ENCODE measurements at regions of chr1 and their contacts with region 1.

Region 1: GRCh38 chr1:158203693-158204457 is 23.2 kb downstream of the CD1D start:
- DNase-seq: no peak
- H3K4me3 Mint-ChIP-seq: no peak overlapping the region
- H3K27ac Mint-ChIP-seq: no peak overlapping the region
- H3K4me1 Mint-ChIP-seq: peaks cover 16% of the 10 kb centered on the region
- H3K27me3 Mint-ChIP-seq: peaks cover 26% of the 10 kb centered on the region

Region 2: GRCh38 chr1:157390651-157391050 is 813.2 kb before region 1 on chr1:
- intact Hi-C with region 1: no loop called
- DNase-seq: no peak
- H3K4me3 Mint-ChIP-seq: no peak overlapping the region
- H3K27ac Mint-ChIP-seq: no peak overlapping the region
- H3K4me1 Mint-ChIP-seq: no peaks in the 10 kb centered on the region
- H3K27me3 Mint-ChIP-seq: peaks cover 16% of the 10 kb centered on the region

Region 3: DNA sequence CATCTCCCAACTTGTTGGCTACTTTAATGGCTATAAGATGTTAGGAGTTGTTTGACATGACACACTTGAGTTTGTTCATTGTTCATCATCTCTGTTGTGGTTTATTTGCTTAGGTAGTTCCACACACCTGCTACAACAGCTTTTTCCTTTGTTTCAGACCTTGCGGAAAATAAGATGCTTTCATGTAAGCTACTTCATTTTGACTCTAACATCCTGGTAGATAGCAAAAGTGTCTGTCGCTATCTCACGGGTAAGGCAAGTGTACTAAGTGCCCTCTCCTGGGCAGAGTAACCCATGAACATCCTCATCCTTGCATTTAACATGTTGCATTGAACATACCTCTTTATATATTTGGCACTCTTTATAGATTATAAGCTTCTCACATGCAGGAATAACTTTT is 197.0 kb after region 1 on chr1:
- intact Hi-C with region 1: loop called (anchors 10 kb)
- DNase-seq: no peak
- H3K4me3 Mint-ChIP-seq: no peak overlapping the region
- H3K27ac Mint-ChIP-seq: no peak overlapping the region
- H3K4me1 Mint-ChIP-seq: peaks cover 10% of the 10 kb centered on the region
- H3K27me3 Mint-ChIP-seq: peaks cover 19% of the 10 kb centered on the region

Region 4: DNA sequence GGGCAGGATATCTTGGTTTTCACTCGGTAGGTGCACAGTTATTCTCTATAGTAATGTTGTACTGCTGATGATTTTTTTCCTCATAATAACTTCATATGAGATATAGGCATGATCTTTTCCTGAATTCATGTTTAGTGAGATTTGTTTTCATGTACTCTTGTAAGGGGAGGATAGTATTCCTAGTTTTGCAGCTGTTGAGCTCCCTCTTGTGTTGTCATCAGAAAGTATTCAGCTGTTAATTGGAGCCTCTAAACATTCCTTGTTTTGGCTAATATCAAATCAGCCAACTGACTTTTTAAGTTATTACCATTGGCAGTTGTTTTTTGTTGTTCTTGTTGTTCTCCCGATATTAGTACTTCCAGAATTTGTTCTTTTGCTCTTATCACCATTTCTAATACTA is 292.5 kb after region 1 on chr1:
- intact Hi-C with region 1: loop called (anchors 1 kb)
- DNase-seq: no peak
- H3K4me3 Mint-ChIP-seq: no peak overlapping the region
- H3K27ac Mint-ChIP-seq: no peak overlapping the region
- H3K4me1 Mint-ChIP-seq: no peaks in the 10 kb centered on the region
- H3K27me3 Mint-ChIP-seq: peaks cover 2% of the 10 kb centered on the region

Region 5: GRCh38 chr1:158793604-158794003 is 589.7 kb after region 1 on chr1:
- intact Hi-C with region 1: loop called (anchors 1 kb)
- DNase-seq: peak; percentile 14
- H3K4me3 Mint-ChIP-seq: no peak overlapping the region
- H3K27ac Mint-ChIP-seq: no peak overlapping the region
- H3K4me1 Mint-ChIP-seq: no peaks in the 10 kb centered on the region
- H3K27me3 Mint-ChIP-seq: peaks cover 20% of the 10 kb centered on the region

Region 6: GRCh38 chr1:159071970-159072582 is 868.2 kb after region 1 on chr1:
- intact Hi-C with region 1: loop called (anchors 1 kb)
- DNase-seq: no peak
- H3K4me3 Mint-ChIP-seq: peak overlapping the region; percentile 12
- H3K27ac Mint-ChIP-seq: peak overlapping the region; percentile 37
- H3K4me1 Mint-ChIP-seq: peaks cover 70% of the 10 kb centered on the region
- H3K27me3 Mint-ChIP-seq: no peaks in the 10 kb centered on the region

Region 7: DNA sequence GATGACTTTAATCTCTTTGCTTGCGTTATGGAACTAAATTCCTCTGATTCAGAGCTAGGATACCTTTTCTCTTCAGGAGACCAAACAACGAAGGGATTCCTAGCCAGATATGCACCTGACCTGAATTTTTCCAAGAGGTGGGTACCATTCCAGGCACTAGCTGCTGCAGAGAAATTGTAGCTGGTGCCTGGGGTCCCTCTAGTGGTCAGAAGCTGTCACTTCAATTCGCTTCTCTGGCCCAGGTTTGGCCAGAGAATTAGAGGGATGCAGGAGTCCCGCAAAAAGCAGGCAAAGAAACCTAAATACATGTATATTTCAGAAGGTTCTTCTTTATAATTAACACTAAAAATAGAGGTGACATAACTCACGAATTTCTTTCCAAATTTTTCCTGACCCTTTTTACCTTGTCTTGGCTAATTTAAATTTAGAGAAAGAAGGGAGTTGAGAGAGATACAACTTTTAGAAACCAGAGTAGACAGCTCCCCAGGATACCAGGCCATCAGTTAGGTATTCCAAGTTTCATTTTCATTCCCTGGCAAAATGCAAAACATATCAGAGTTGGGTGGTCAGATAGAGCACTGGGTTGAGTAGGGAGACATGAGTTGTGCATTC is 1010.4 kb after region 1 on chr1:
- intact Hi-C with region 1: loop called (anchors 10 kb)
- DNase-seq: peak; percentile 10
- H3K4me3 Mint-ChIP-seq: no peak overlapping the region
- H3K27ac Mint-ChIP-seq: no peak overlapping the region
- H3K4me1 Mint-ChIP-seq: no peaks in the 10 kb centered on the region
- H3K27me3 Mint-ChIP-seq: peaks cover 12% of the 10 kb centered on the region